Heart right ventricle (tissue), 16 donors: ENCODE measurements at regions of chr5 and their contacts with region 1.

Region 1: GRCh38 chr5:21244982-21245381 is 1257.0 kb upstream of the CDH18 start:
- DNase-seq: no peak
- ATAC-seq: no peak
- H3K4me3 ChIP-seq: no peak overlapping the region
- H3K27ac ChIP-seq: no peak overlapping the region
- H3K4me1 ChIP-seq: no peaks in the 10 kb centered on the region
- H3K27me3 ChIP-seq: no peaks in the 10 kb centered on the region
- CTCF ChIP-seq: no peak

Region 2: GRCh38 chr5:21013237-21013636 is 231.7 kb before region 1 on chr5:
- intact Hi-C with region 1: loop called in 1 of 10 experiments (anchors 5 kb)
- DNase-seq: no peak
- ATAC-seq: no peak
- H3K4me3 ChIP-seq: no peak overlapping the region
- H3K27ac ChIP-seq: no peak overlapping the region
- H3K4me1 ChIP-seq: no peaks in the 10 kb centered on the region
- H3K27me3 ChIP-seq: no peaks in the 10 kb centered on the region
- CTCF ChIP-seq: no peak